ENCODE measurements at regions of chr3 and their contacts with region 1.

Region 1: GRCh38 chr3:44323341-44323955 is 15.1 kb upstream of the TCAIM start:
- DNase-seq: peak; percentile 16
- H3K4me3 Mint-ChIP-seq: no peak overlapping the region
- H3K27ac Mint-ChIP-seq: no peak overlapping the region
- H3K4me1 Mint-ChIP-seq: peaks cover 1% of the 10 kb centered on the region
- H3K27me3 Mint-ChIP-seq: peaks cover 27% of the 10 kb centered on the region

Region 2: DNA sequence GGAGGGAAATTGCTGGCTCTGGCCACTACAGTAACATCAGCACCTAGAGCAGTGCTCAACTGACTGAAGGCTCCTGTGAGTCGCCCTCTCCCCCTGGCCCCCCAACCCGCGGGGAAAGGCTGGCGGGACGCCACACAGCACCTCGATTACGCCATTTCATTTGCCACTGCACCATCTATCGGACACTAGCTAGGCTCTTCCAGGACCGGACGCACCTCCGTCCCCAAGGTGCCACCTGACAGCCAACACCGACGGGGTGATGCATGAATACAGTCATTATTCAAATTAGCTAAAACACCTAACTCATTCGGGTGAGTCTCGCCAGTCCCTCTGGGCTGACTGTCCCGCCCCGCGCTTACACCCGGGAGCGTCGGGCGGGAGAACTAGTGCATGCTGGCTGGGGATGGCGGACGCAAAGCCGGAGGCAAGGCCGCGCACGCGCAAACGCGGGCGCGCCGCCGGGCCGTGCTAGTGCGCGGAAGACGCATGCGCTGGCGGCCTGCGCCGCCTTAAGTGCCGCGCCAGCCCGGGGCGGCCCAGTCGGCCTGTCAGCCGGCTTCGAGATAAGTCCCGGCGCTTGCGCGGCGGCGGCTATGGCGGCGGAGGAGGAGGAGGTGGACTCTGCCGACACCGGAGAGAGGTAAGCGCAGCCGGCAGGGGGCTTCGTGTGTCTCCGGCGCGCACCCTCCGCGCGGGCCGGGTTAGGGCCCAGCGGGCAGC is 632.9 kb before region 1 on chr3 and contains the start of gene ABHD5:
- intact Hi-C with region 1: no loop called
- DNase-seq: peak; percentile 91
- H3K4me3 Mint-ChIP-seq: peak within 1 kb of the TSS; percentile 85
- H3K27ac Mint-ChIP-seq: peak within 1 kb of the TSS; percentile 82
- H3K4me1 Mint-ChIP-seq: peaks cover 23% of the 10 kb centered on the region
- H3K27me3 Mint-ChIP-seq: peaks cover 8% of the 10 kb centered on the region
- total RNA-seq, gene ABHD5: 11.9 and 15.2 TPM in 2 replicates

Region 3: GRCh38 chr3:44342176-44342790 is 18.8 kb after region 1 on chr3:
- intact Hi-C with region 1: no loop called
- DNase-seq: no peak
- H3K4me3 Mint-ChIP-seq: no peak overlapping the region
- H3K27ac Mint-ChIP-seq: no peak overlapping the region
- H3K4me1 Mint-ChIP-seq: peaks cover 19% of the 10 kb centered on the region
- H3K27me3 Mint-ChIP-seq: no peaks in the 10 kb centered on the region

Region 4: GRCh38 chr3:44355362-44356033 is 32.0 kb after region 1 on chr3:
- intact Hi-C with region 1: no loop called
- DNase-seq: no peak
- H3K4me3 Mint-ChIP-seq: no peak overlapping the region
- H3K27ac Mint-ChIP-seq: no peak overlapping the region
- H3K4me1 Mint-ChIP-seq: peaks cover 2% of the 10 kb centered on the region
- H3K27me3 Mint-ChIP-seq: no peaks in the 10 kb centered on the region

Region 5: DNA sequence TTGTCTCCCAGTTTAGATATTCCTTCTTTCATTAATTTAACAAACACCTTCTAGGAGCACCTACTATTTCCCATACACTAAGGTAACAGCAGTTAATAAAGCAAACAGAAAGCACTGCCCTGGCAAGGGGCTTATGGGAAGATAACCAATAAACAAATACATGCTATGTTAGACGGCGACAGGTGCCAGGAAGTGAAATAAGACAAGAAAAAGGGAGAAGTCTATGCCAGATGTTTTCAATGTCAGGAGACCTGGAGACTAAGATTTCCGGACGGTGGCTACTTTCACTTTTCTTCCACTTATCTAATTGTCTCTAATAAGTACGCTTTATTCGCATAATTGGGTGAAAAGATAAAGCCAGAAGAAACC is 186.5 kb after region 1 on chr3:
- intact Hi-C with region 1: loop called (anchors 5 kb)
- DNase-seq: no peak
- H3K4me3 Mint-ChIP-seq: peak overlapping the region; percentile 93
- H3K27ac Mint-ChIP-seq: peak overlapping the region; percentile 84
- H3K4me1 Mint-ChIP-seq: peaks cover 19% of the 10 kb centered on the region
- H3K27me3 Mint-ChIP-seq: no peaks in the 10 kb centered on the region

Region 6: DNA sequence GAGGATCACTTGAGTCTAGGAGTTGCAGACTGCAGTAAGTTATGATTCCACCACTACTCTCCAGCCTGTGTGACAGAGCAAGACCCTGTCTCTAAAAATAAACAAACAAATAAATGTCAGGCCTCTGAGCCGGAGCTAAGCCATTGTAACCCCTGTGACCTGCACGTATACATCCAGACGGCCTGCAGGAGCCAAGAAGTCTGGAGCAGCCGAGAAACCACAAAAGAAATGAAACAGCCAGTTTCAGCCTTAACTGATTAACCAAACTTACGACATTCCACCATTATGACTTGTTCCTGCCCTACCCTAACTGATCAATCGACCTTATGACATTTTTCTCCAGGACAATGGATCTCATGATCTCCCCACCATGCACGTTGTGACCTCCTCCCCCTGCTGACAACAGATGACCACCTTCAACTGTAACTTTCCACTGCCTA is 199.1 kb after region 1 on chr3:
- intact Hi-C with region 1: no loop called
- DNase-seq: no peak
- H3K4me3 Mint-ChIP-seq: no peak overlapping the region
- H3K27ac Mint-ChIP-seq: no peak overlapping the region
- H3K4me1 Mint-ChIP-seq: peaks cover 6% of the 10 kb centered on the region
- H3K27me3 Mint-ChIP-seq: peaks cover 31% of the 10 kb centered on the region

Region 7: GRCh38 chr3:44913868-44914468 is 590.5 kb after region 1 on chr3:
- intact Hi-C with region 1: loop called (anchors 10 kb)
- DNase-seq: peak; percentile 36
- H3K4me3 Mint-ChIP-seq: no peak overlapping the region
- H3K27ac Mint-ChIP-seq: no peak overlapping the region
- H3K4me1 Mint-ChIP-seq: no peaks in the 10 kb centered on the region
- H3K27me3 Mint-ChIP-seq: peaks cover 9% of the 10 kb centered on the region

Measured in activated T-helper 2 cell treated with anti-CD3 and anti-CD28 coated beads, Interferon-gamma antibody, Interleukin-2, Interleukin-4, amounts not matched to agents 10 μg/mL and 5 μg/mL and 100 μg/mL, durations not matched to agents 14 hours and 24 hours and 36 hours (primary cell).